ENCODE measurements at regions of chr9 and their contacts with region 1.

Region 1: GRCh38 chr9:122860317-122861142 is 32.1 kb upstream of the PDCL start:
- DNase-seq: peak; percentile 66
- ATAC-seq: peak; percentile 95
- H3K4me3 ChIP-seq: no peak overlapping the region
- H3K27ac ChIP-seq: peak overlapping the region; percentile 74
- H3K4me1 ChIP-seq: peaks cover 19% of the 10 kb centered on the region
- H3K27me3 ChIP-seq: no peaks in the 10 kb centered on the region
- CTCF ChIP-seq: no peak

Region 2: DNA sequence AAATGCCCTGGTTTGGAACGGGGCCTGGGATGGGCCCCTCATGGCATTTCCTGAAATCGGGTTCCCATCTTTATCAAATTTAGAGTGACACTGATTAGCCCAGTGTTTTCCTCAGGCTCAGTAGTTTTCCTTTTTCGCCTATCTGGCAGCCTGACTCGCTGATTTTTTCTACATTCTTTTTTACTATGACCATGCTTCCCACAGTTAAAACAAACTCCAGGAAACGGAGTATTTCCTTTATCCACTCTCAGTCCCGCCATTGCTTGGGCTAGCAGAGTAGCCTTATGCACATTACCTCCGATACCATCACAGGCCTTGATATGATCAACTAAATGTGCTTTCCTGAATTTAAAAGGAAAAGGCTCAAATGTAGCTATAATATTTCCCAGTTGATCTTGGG is 240.5 kb before region 1 on chr9:
- CTCF ChIA-PET with region 1: no interaction called
- POLR2A ChIA-PET with region 1: no interaction called
- intact Hi-C with region 1: no loop called
- DNase-seq: no peak
- ATAC-seq: no peak
- H3K4me3 ChIP-seq: no peak overlapping the region
- H3K27ac ChIP-seq: no peak overlapping the region
- H3K4me1 ChIP-seq: no peaks in the 10 kb centered on the region
- H3K27me3 ChIP-seq: peaks cover 14% of the 10 kb centered on the region
- CTCF ChIP-seq: no peak

Region 3: GRCh38 chr9:122684851-122685250 is 175.7 kb before region 1 on chr9:
- CTCF ChIA-PET with region 1: no interaction called
- POLR2A ChIA-PET with region 1: no interaction called
- intact Hi-C with region 1: no loop called
- DNase-seq: no peak
- ATAC-seq: no peak
- H3K4me3 ChIP-seq: no peak overlapping the region
- H3K27ac ChIP-seq: no peak overlapping the region
- H3K4me1 ChIP-seq: no peaks in the 10 kb centered on the region
- H3K27me3 ChIP-seq: 0 out of 2 replicates have a peak, but pooled peaks cover 3% of the 10 kb centered on the region
- CTCF ChIP-seq: no peak

Region 4: GRCh38 chr9:122827761-122828093 is 32.8 kb before region 1 on chr9:
- CTCF ChIA-PET with region 1: no interaction called
- POLR2A ChIA-PET with region 1: interaction called, 11 read pairs
- intact Hi-C with region 1: no loop called
- DNase-seq: no peak
- ATAC-seq: peak; percentile 27
- H3K4me3 ChIP-seq: peak overlapping the region; percentile 97
- H3K27ac ChIP-seq: peak overlapping the region; percentile 78
- H3K4me1 ChIP-seq: peaks cover 11% of the 10 kb centered on the region
- H3K27me3 ChIP-seq: no peaks in the 10 kb centered on the region
- CTCF ChIP-seq: no peak

Region 5: GRCh38 chr9:122897969-122898368 is 37.4 kb after region 1 on chr9:
- CTCF ChIA-PET with region 1: no interaction called
- POLR2A ChIA-PET with region 1: no interaction called
- intact Hi-C with region 1: loop called (anchors 2 kb)
- DNase-seq: peak; percentile 58
- ATAC-seq: peak; percentile 75
- H3K4me3 ChIP-seq: no peak overlapping the region
- H3K27ac ChIP-seq: peak overlapping the region; percentile 1; the same call in 1 of the 2 replicates
- H3K4me1 ChIP-seq: peaks cover 19% of the 10 kb centered on the region
- H3K27me3 ChIP-seq: no peaks in the 10 kb centered on the region
- CTCF ChIP-seq: no peak

Measured in PC-3 (cell line).